Psoas muscle (tissue), 8 donors: ENCODE measurements at regions of chr11 and their contacts with region 1.

Region 1: DNA sequence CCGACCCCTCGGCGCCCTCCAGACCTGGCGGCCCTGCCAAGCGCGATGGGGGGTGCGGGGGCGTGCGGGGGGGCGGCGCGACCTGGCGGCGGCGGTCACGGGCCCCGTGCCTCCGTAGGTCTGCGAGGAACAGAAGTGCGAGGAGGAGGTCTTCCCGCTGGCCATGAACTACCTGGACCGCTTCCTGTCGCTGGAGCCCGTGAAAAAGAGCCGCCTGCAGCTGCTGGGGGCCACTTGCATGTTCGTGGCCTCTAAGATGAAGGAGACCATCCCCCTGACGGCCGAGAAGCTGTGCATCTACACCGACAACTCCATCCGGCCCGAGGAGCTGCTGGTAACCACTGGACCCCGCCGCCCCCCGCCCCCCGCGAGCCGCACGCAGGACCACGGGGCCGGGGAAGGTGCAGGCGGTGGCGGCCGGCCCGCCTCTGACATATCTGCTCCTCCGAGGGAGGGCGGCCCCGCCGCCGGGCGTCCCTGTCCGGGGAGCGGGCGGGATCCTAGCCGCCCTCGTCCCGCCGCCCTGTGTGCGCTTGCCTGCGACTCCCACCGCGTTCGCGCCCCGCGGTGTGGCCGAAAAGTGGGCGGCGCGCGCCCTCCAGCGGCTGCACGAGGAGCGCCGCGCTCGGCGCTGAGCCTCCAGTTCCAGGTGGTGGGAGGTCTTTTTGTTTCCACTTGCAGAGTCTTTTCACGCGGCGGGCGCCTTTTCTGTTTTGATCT is 2.1 kb downstream of the CCND1 start:
- DNase-seq: peak; percentile 78 to 84
- ATAC-seq: peak; percentile 76 to 86 (median 84)
- H3K4me3 ChIP-seq: peak overlapping the region; percentile 75
- H3K27ac ChIP-seq: no peak overlapping the region
- H3K4me1 ChIP-seq: peaks cover 20% of the 10 kb centered on the region
- H3K27me3 ChIP-seq: peaks cover 0 to 79% (median 19%) of the 10 kb centered on the region in 3 donors
- CTCF ChIP-seq: peak; percentile 92

Region 2: GRCh38 chr11:69101115-69101791 is 541.8 kb before region 1 on chr11:
- intact Hi-C with region 1: loop called (anchors 1 kb)
- DNase-seq: peak; percentile 59 to 79
- ATAC-seq: peak; percentile 79 to 89 (median 87)
- H3K4me3 ChIP-seq: no peak overlapping the region
- H3K27ac ChIP-seq: no peak overlapping the region
- H3K4me1 ChIP-seq: no peaks in the 10 kb centered on the region
- H3K27me3 ChIP-seq: peaks cover 0 to 34% (median 2%) of the 10 kb centered on the region in 3 donors
- CTCF ChIP-seq: peak; percentile 98

Region 3: GRCh38 chr11:69296890-69297786 is 345.9 kb before region 1 on chr11:
- intact Hi-C with region 1: loop called (anchors 2 to 10 kb)
- DNase-seq: peak; percentile 94 to 95
- ATAC-seq: peak; percentile 79 to 88 (median 82)
- H3K4me3 ChIP-seq: peak overlapping the region; percentile 45
- H3K27ac ChIP-seq: peak overlapping the region; percentile 72
- H3K4me1 ChIP-seq: peaks cover 20% of the 10 kb centered on the region
- H3K27me3 ChIP-seq: peaks cover 0 to 11% (median 0%) of the 10 kb centered on the region in 3 donors
- CTCF ChIP-seq: no peak